ENCODE measurements at regions of chr21 and their contacts with region 1.

Region 1: DNA sequence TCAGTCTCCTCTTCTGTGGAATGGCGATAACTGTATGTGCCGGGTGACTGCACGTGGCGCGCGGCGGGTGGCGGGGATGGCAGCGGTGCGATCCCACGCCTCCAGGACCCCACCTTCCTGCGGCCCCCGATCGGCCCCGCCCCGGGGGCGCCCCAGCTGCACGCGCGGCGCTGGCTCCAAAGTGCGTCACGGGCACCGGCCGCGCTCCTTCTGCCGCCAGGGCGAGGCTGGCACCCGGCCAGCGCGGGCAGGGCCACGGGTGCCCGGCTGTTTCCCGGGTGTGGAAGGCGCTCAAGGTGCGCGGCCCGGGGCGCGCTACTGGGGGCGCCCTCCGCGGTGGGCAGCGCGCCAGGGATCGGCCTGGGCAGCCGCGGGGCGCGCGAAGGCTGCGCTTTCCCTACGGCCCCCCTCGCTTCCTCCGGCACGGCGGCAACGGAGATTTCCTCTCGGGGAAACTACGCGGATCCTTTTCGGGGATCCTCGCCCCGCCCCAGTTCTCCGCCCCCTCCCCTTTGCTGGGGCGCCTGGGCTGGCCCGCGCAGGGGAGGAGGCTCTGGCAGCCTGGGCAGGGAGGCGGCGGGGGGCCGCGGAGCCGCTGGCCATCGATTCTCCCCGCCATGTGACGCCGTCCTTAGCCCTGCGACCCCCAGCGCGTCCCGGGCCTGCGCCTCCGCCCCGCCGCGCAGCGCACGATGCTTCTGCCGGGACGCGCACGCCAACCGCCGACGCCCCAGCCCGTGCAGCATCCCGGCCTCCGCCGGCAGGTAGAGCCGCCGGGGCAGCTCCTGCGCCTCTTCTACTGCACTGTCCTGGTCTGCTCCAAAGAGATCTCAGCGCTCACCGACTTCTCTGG is at the start of gene EVA1C:
- DNase-seq: peak in 3 of 4 donors; percentile 46 to 88 (median 55)
- ATAC-seq: peak; percentile 57
- H3K4me3 ChIP-seq: peak within 1 kb of the TSS; percentile 74 to 75
- H3K27ac ChIP-seq: peak within 1 kb of the TSS; percentile 96 to 98
- H3K4me1 ChIP-seq: peaks cover 17 to 44% of the 10 kb centered on the region in 2 donors
- H3K27me3 ChIP-seq: peaks cover 0 to 26% of the 10 kb centered on the region in 2 donors
- CTCF ChIP-seq: no peak
- polyA plus RNA-seq, gene EVA1C: 2.9 to 5.0 (median 3.8) TPM

Region 2: DNA sequence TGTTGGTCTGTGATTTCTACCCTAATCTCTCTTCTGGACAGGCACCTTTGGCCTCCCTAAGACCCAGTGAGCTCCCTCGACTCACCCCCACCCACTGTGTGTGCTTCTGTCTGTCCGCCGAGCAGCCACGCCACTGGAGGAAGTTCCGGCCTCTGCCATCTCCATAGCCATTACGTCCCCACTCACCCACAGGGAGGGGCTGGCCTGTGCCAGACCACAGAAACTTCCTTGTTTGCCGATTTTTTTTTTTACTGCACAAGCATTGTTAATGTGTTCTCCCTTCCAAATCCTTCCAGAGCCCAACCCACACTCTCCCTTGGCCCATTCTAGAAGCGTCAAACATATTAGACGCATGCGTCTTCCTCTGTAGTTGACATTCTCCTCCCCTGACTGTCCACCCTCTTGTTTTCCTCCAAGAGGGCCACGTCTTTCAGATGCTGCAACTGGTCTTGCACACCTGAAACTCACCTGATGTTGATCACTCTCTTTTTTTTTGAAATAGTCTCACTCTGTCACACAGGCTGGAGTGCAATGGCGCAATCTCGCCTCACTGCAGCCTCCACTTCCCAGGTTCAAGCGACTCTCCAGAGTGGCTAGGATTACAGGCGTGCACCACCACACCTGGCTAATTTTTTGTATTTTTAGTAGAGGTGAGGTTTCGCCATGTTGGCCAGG is 72.5 kb after region 1 on chr21:
- intact Hi-C with region 1: loop called in 1 of 2 experiments (anchors 10 kb)
- DNase-seq: peak in 2 of 4 donors; percentile 80 to 83
- ATAC-seq: peak; percentile 85
- H3K4me3 ChIP-seq: no peak overlapping the region
- H3K27ac ChIP-seq: peak overlapping the region; percentile 46 to 63
- H3K4me1 ChIP-seq: peaks cover 8% of the 10 kb centered on the region in 2 donors
- H3K27me3 ChIP-seq: no peaks in the 10 kb centered on the region
- CTCF ChIP-seq: no peak

Measured in left lung (tissue), 14 donors.